ENCODE measurements at regions of chr10 and their contacts with region 1.

Region 1: GRCh38 chr10:102917962-102918816 is at the start of gene CNNM2:
- DNase-seq: peak; percentile 100
- ATAC-seq: peak; percentile 94
- H3K4me3 ChIP-seq: peak within 1 kb of the TSS; percentile 72
- H3K27ac ChIP-seq: peak within 1 kb of the TSS; percentile 91
- H3K4me1 ChIP-seq: no peaks in the 10 kb centered on the region
- H3K27me3 ChIP-seq: no peaks in the 10 kb centered on the region
- CTCF ChIP-seq: no peak
- POLR2A ChIP-seq: peak; percentile 78
- RAD21 ChIP-seq: peak; percentile 10; the same call in 1 of the 2 replicates
- total RNA-seq, gene CNNM2: 5.6 and 6.4 TPM in 2 replicates

Region 2: DNA sequence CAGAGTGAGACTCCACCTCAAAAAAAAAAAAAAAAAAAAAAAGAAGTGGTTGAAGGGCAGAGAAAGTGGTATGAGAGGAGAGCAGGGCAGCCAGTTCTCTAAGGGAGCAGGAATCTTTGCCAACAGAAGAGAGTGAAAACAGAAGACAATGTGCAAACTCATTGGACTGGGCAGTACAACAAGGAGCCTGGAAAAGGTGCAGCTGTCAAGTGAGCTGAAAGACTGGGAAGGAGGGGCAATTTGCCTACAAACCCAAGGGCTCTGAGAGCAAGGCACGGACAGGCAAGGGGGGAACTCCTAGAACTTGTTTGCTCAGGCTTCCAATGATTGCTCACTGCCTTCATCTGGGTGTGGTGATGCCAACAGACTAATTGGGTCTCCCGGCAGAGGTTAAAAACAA is 425.2 kb before region 1 on chr10:
- CTCF ChIA-PET with region 1: no interaction called
- POLR2A ChIA-PET with region 1: no interaction called
- dilution Hi-C with region 1: no loop called
- in situ Hi-C with region 1: no loop called
- intact Hi-C with region 1: no loop called
- DNase-seq: no peak
- ATAC-seq: no peak; the same call in 1 of the 2 replicates
- H3K4me3 ChIP-seq: no peak overlapping the region
- H3K27ac ChIP-seq: no peak overlapping the region
- H3K4me1 ChIP-seq: no peaks in the 10 kb centered on the region
- H3K27me3 ChIP-seq: no peaks in the 10 kb centered on the region
- CTCF ChIP-seq: no peak
- POLR2A ChIP-seq: no peak
- RAD21 ChIP-seq: no peak

Region 3: DNA sequence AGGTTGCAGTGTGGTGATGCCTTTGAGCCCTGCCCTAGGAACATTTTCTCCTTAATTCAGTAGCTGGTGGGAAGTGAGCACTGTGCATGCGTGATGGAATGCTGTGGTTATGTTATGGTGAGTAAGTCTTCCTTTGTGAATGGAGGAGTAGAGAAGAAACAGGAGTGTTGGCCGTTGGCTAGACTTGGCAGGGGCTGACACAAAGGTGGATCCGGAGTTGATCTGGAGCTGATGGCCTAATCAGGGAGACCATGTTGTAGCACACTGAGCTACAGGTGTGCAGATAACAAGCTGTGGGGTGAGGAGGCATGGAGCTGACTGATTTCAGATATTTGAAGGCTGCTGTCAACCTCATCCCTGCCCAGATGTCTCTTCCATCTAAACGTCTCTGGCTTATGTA is 122.2 kb after region 1 on chr10:
- CTCF ChIA-PET with region 1: interaction called, 5 read pairs
- POLR2A ChIA-PET with region 1: interaction called, 3 read pairs
- dilution Hi-C with region 1: no loop called
- in situ Hi-C with region 1: no loop called
- intact Hi-C with region 1: loop called (anchors 1 kb)
- DNase-seq: peak; percentile 97
- ATAC-seq: peak; percentile 38
- H3K4me3 ChIP-seq: no peak overlapping the region
- H3K27ac ChIP-seq: peak overlapping the region; percentile 49
- H3K4me1 ChIP-seq: peaks cover 47% of the 10 kb centered on the region
- H3K27me3 ChIP-seq: no peaks in the 10 kb centered on the region
- CTCF ChIP-seq: no peak
- POLR2A ChIP-seq: no peak; the same call in 1 of the 2 replicates
- RAD21 ChIP-seq: peak; percentile 24

Region 4: GRCh38 chr10:103062604-103063590 is 144.7 kb after region 1 on chr10:
- CTCF ChIA-PET with region 1: interaction called, 5 read pairs
- POLR2A ChIA-PET with region 1: no interaction called
- dilution Hi-C with region 1: no loop called
- in situ Hi-C with region 1: loop called (anchors 5 kb)
- intact Hi-C with region 1: no loop called
- DNase-seq: no peak
- ATAC-seq: no peak; the same call in 1 of the 2 replicates
- H3K4me3 ChIP-seq: no peak overlapping the region
- H3K27ac ChIP-seq: no peak overlapping the region
- H3K4me1 ChIP-seq: peaks cover 3% of the 10 kb centered on the region; the same call in 1 of the 2 replicates
- H3K27me3 ChIP-seq: no peaks in the 10 kb centered on the region
- CTCF ChIP-seq: peak; percentile 35
- POLR2A ChIP-seq: no peak
- RAD21 ChIP-seq: peak; percentile 58

Region 5: GRCh38 chr10:103192451-103193106 is 274.4 kb after region 1 on chr10:
- CTCF ChIA-PET with region 1: no interaction called
- POLR2A ChIA-PET with region 1: no interaction called
- dilution Hi-C with region 1: no loop called
- in situ Hi-C with region 1: no loop called
- intact Hi-C with region 1: loop called (anchors 1 kb)
- DNase-seq: peak; percentile 75
- ATAC-seq: peak; percentile 62
- H3K4me3 ChIP-seq: peak overlapping the region; percentile 92
- H3K27ac ChIP-seq: peak overlapping the region; percentile 98
- H3K4me1 ChIP-seq: peaks cover 16% of the 10 kb centered on the region
- H3K27me3 ChIP-seq: no peaks in the 10 kb centered on the region
- CTCF ChIP-seq: no peak
- POLR2A ChIP-seq: no peak; the same call in 1 of the 2 replicates
- RAD21 ChIP-seq: no peak

Region 6: DNA sequence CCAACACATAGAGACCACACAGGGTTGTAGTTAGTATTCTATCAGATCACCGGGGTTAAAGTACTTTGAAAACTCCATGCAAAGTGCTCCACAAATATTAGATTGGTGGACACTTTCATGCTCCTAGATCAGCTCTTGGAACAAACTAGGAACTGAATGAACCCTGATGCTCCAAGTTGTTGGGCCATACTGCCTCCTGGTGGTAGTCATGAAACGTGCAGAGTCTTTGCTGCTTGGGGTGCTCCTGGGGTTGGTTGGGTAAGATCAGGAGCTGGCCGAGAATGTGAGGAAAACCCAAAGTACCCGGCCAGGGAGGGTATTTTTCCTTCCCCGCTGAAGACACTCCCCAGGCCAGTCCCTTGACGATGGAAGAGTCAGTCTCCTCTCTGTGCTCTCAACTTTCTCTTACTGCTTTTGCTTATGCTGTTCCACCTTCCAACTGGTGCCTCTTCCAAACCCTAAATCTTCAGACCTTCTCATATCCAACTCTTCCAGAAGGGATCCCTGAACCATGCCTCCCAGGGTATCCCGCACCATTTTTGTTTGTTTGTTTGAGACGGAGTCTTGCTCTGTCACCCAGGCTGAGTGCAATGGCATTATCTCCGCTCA is 326.6 kb after region 1 on chr10:
- CTCF ChIA-PET with region 1: interaction called, 5 read pairs
- POLR2A ChIA-PET with region 1: no interaction called
- dilution Hi-C with region 1: no loop called
- in situ Hi-C with region 1: loop called (anchors 5 kb)
- intact Hi-C with region 1: loop called (anchors 1 kb)
- DNase-seq: peak; percentile 81
- ATAC-seq: peak; percentile 94
- H3K4me3 ChIP-seq: no peak overlapping the region
- H3K27ac ChIP-seq: no peak overlapping the region
- H3K4me1 ChIP-seq: peaks cover 6% of the 10 kb centered on the region
- H3K27me3 ChIP-seq: no peaks in the 10 kb centered on the region
- CTCF ChIP-seq: peak; percentile 91
- POLR2A ChIP-seq: no peak
- RAD21 ChIP-seq: peak; percentile 96

Region 7: GRCh38 chr10:103458720-103459119 is 540.5 kb after region 1 on chr10 and contains the start of gene CALHM1:
- CTCF ChIA-PET with region 1: no interaction called
- POLR2A ChIA-PET with region 1: no interaction called
- dilution Hi-C with region 1: no loop called
- in situ Hi-C with region 1: no loop called
- intact Hi-C with region 1: no loop called
- DNase-seq: no peak
- ATAC-seq: no peak
- H3K4me3 ChIP-seq: no peak within 1 kb of the TSS
- H3K27ac ChIP-seq: no peak within 1 kb of the TSS
- H3K4me1 ChIP-seq: no peaks in the 10 kb centered on the region
- H3K27me3 ChIP-seq: peaks cover 19% of the 10 kb centered on the region
- CTCF ChIP-seq: no peak
- POLR2A ChIP-seq: no peak
- RAD21 ChIP-seq: no peak
- total RNA-seq, gene CALHM1: not detected in 2 replicates